Caco-2 (cell line): ENCODE measurements at regions of chr11 and their contacts with region 1.

Region 1: GRCh38 chr11:58513747-58514367 is 6.0 kb upstream of the OR5B21 start:
- DNase-seq: peak; percentile 49 to 70
- H3K4me3 ChIP-seq: no peak overlapping the region
- H3K4me3 Mint-ChIP-seq: no peak overlapping the region
- H3K27ac Mint-ChIP-seq: no peak overlapping the region
- H3K4me1 ChIP-seq: no peaks in the 10 kb centered on the region
- H3K4me1 Mint-ChIP-seq: no peaks in the 10 kb centered on the region
- H3K27me3 ChIP-seq: no peaks in the 10 kb centered on the region
- H3K27me3 Mint-ChIP-seq: peaks cover 16% of the 10 kb centered on the region
- CTCF ChIP-seq: peak; percentile 72 to 73

Region 2: GRCh38 chr11:57751676-57752253 is 762.1 kb before region 1 on chr11 and contains the start of gene BTBD18:
- CTCF ChIA-PET with region 1: interaction called, 3 read pairs
- POLR2A ChIA-PET with region 1: no interaction called
- intact Hi-C with region 1: loop called (anchors 5 kb)
- DNase-seq: peak; percentile 66 to 67
- H3K4me3 ChIP-seq: no peak within 1 kb of the TSS
- H3K4me3 Mint-ChIP-seq: no peak within 1 kb of the TSS
- H3K27ac Mint-ChIP-seq: peak within 1 kb of the TSS; percentile 12
- H3K4me1 ChIP-seq: peaks cover 12% of the 10 kb centered on the region; the same call in 1 of the 2 replicates
- H3K4me1 Mint-ChIP-seq: peaks cover 19% of the 10 kb centered on the region
- H3K27me3 ChIP-seq: no peaks in the 10 kb centered on the region
- H3K27me3 Mint-ChIP-seq: no peaks in the 10 kb centered on the region
- CTCF ChIP-seq: peak; percentile 54 to 58
- total RNA-seq, gene BTBD18: not detected in 2 replicates

Region 3: GRCh38 chr11:57823859-57824258 is 690.0 kb before region 1 on chr11:
- CTCF ChIA-PET with region 1: no interaction called
- POLR2A ChIA-PET with region 1: no interaction called
- intact Hi-C with region 1: loop called (anchors 5 kb)
- DNase-seq: no peak
- H3K4me3 ChIP-seq: no peak overlapping the region
- H3K4me3 Mint-ChIP-seq: no peak overlapping the region
- H3K27ac Mint-ChIP-seq: no peak overlapping the region
- H3K4me1 ChIP-seq: no peaks in the 10 kb centered on the region
- H3K4me1 Mint-ChIP-seq: no peaks in the 10 kb centered on the region
- H3K27me3 ChIP-seq: no peaks in the 10 kb centered on the region
- H3K27me3 Mint-ChIP-seq: no peaks in the 10 kb centered on the region
- CTCF ChIP-seq: no peak

Region 4: GRCh38 chr11:57842873-57843272 is 671.0 kb before region 1 on chr11:
- CTCF ChIA-PET with region 1: no interaction called
- POLR2A ChIA-PET with region 1: no interaction called
- intact Hi-C with region 1: loop called (anchors 5 kb)
- DNase-seq: no peak
- H3K4me3 ChIP-seq: no peak overlapping the region
- H3K4me3 Mint-ChIP-seq: no peak overlapping the region
- H3K27ac Mint-ChIP-seq: no peak overlapping the region
- H3K4me1 ChIP-seq: no peaks in the 10 kb centered on the region
- H3K4me1 Mint-ChIP-seq: no peaks in the 10 kb centered on the region
- H3K27me3 ChIP-seq: 0 out of 2 replicates have a peak, but pooled peaks cover 1% of the 10 kb centered on the region
- H3K27me3 Mint-ChIP-seq: no peaks in the 10 kb centered on the region
- CTCF ChIP-seq: no peak

Region 5: DNA sequence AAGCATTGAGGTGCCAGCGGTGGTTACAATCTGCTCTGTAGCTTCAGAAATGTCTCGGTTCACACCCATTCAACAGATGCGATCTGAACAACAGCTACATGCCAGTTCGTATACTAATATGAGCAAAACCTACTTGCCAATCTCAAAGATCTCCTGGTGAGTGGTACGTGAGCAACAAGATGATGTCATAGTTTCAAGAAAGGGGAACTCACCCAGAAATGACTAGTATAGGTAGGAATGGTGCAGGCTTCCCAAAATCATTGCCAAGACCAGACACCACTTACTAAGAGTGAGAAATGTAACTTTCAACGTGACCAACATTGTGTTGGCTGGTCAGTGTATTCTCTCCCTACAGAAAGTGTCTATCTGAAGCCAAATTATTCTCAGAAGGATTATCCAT is 452.0 kb before region 1 on chr11:
- CTCF ChIA-PET with region 1: no interaction called
- POLR2A ChIA-PET with region 1: no interaction called
- intact Hi-C with region 1: loop called (anchors 10 kb)
- DNase-seq: no peak
- H3K4me3 ChIP-seq: no peak overlapping the region
- H3K4me3 Mint-ChIP-seq: no peak overlapping the region
- H3K27ac Mint-ChIP-seq: no peak overlapping the region
- H3K4me1 ChIP-seq: peaks cover 33% of the 10 kb centered on the region
- H3K4me1 Mint-ChIP-seq: peaks cover 17% of the 10 kb centered on the region
- H3K27me3 ChIP-seq: no peaks in the 10 kb centered on the region
- H3K27me3 Mint-ChIP-seq: no peaks in the 10 kb centered on the region
- CTCF ChIP-seq: no peak

Region 6: GRCh38 chr11:58133309-58134076 is 380.4 kb before region 1 on chr11:
- CTCF ChIA-PET with region 1: interaction called, 4 read pairs
- POLR2A ChIA-PET with region 1: no interaction called
- intact Hi-C with region 1: loop called (anchors 2 kb)
- DNase-seq: peak; percentile 45 to 51
- H3K4me3 ChIP-seq: no peak overlapping the region
- H3K4me3 Mint-ChIP-seq: no peak overlapping the region
- H3K27ac Mint-ChIP-seq: no peak overlapping the region
- H3K4me1 ChIP-seq: 0 out of 2 replicates have a peak, but pooled peaks cover 5% of the 10 kb centered on the region
- H3K4me1 Mint-ChIP-seq: peaks cover 12% of the 10 kb centered on the region
- H3K27me3 ChIP-seq: no peaks in the 10 kb centered on the region
- H3K27me3 Mint-ChIP-seq: no peaks in the 10 kb centered on the region
- CTCF ChIP-seq: peak in 1 of 2 experiments; percentile 29

Region 7: GRCh38 chr11:58316142-58316541 is 197.7 kb before region 1 on chr11:
- CTCF ChIA-PET with region 1: no interaction called
- POLR2A ChIA-PET with region 1: no interaction called
- intact Hi-C with region 1: no loop called
- DNase-seq: no peak
- H3K4me3 ChIP-seq: no peak overlapping the region
- H3K4me3 Mint-ChIP-seq: no peak overlapping the region
- H3K27ac Mint-ChIP-seq: no peak overlapping the region
- H3K4me1 ChIP-seq: no peaks in the 10 kb centered on the region
- H3K4me1 Mint-ChIP-seq: no peaks in the 10 kb centered on the region
- H3K27me3 ChIP-seq: no peaks in the 10 kb centered on the region
- H3K27me3 Mint-ChIP-seq: no peaks in the 10 kb centered on the region
- CTCF ChIP-seq: no peak